ENCODE measurements at regions of chr16 and their contacts with region 1.

Region 1: DNA sequence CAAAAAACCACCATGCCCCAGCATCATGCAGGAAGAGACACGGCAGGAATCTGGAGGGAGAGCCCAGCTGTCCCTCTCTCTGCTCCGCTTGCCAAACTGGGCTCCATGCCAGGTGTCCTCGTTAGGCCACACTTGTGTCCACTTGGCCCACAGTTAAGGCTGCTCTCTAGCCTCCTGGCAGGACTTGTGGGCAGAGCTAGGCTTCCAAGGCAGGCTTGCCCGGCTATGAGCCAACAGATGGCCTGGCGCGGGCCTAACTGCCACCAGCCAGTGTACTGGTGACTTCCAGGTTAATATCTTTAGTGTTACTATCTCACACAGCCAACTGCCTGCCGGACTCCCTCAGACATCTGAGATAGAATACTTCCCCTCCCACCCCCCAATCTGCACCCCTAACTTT is 10.6 kb downstream of the ATP6V0D1 start:
- DNase-seq: no peak
- H3K4me3 ChIP-seq: no peak overlapping the region
- CTCF ChIP-seq: no peak

Region 2: DNA sequence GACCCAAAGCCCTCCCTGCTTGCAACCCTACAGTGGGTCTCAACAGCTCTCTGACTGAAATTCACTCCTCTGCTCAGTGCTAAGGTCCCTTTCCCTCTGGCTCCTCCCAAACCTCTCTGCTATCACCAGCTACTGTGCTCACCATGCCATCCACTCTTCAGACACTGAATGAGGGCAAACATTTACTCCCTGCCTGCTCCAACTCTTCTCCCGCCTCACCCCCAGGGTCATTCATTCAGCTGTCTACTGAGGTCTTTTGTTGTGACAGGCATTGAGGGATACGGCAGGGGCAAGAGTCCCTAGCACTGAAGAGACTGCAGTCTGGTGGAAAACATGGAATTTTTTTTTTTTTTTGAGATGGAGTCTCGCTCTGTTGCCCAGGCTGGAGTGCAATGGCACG is 68.1 kb before region 1 on chr16:
- CTCF ChIA-PET with region 1: no interaction called
- POLR2A ChIA-PET with region 1: no interaction called
- DNase-seq: no peak
- H3K4me3 ChIP-seq: no peak overlapping the region
- CTCF ChIP-seq: no peak

Region 3: DNA sequence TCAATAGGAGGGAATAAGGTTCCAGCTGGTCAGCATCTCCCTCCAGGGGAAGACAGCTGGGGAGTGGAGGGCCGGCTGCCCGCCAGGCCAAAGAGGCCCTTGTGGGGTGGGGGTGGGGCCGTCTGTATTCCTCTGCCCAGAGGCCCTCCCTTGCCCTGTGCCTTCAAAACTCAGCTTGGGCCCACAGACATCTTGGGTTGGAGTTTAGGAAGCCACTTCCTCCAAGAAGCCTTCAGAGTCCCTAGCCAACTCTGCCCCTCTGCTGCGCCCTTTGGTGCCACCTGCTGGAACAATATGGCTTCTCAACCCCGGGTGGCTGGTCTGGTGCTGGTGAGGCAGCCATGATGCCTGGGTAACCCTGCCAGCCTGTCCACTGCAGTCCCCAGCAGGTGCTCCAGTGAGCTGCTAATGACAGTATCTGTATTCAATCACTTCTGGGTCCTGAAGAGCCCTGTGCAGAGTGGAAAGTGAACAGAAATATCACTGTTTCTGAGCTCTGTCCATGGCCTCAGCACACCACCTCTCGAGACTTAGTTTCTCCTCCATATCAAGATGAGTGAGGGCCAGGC is 22.8 kb before region 1 on chr16:
- CTCF ChIA-PET with region 1: interaction called, 53 read pairs
- POLR2A ChIA-PET with region 1: no interaction called
- DNase-seq: no peak
- H3K4me3 ChIP-seq: no peak overlapping the region
- CTCF ChIP-seq: peak; percentile 34

Region 4: DNA sequence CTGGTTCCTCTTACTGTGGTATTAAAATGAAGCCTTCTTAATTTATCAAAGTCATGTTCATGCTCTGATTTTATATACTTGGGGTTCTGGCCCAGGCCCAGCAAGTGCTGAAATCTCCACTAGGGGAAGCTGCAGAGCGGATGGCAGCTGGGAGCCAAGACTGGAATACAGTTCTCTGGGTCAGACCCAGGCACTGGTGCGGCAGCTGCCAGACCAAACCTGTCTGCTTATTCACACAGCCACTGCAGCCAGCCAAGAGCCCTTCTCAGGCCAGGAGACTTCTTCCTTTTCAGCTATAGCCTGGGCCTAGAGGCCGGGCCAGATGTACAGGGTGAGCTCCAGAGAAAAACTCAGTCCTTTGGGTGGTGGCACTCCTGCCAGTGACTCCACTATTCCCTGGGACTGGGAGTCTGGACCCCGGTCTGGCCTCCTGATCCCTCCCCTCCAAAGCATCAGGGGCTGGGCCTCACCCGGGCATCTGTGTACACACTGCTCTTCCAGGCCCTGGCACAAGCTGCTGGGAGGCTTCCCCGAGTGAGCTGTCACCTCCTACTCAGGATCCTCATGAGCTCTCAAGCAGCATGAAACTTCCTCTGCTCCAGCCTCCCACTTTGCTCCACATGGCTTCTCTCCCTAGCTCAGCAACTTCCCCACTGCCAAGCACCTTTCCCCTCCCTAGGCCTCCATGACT is 13.8 kb before region 1 on chr16:
- CTCF ChIA-PET with region 1: interaction called, 36 read pairs
- POLR2A ChIA-PET with region 1: no interaction called
- DNase-seq: no peak
- H3K4me3 ChIP-seq: no peak overlapping the region
- CTCF ChIP-seq: peak; percentile 21

Region 5: DNA sequence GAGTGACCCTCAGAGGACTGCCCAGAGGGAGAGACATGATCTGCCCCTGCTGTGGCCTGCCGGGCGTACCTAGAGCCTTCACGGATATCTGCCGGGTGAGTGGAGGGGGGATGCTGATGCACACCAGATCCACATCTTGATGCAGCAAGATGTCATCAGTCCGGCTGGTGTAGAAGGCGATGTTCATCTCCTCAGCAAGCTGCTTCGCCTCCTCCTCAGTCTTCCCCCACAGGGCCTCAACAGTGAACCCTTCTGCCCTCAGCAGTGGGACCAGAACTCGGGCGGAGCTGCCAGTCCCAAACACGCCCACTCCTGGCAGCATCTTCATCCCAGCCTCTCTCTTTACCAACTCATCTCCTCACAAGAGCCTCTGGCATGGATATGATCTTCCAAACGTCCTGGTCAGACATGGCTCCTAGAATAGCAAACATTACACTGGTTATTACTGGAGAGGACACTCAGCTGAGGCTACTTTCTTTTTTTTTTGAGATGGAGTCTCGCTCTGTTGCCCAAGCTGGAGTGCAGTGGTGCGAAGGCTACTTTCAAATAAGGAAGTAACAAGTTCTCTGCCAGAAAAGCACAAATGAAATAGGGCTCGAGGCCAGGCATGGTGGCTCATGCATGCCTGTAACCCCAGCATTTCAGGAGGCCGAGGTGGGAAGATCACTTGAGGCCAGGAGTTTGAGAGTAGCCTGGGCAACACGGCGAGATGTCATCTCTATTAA is 215.2 kb after region 1 on chr16:
- CTCF ChIA-PET with region 1: no interaction called
- POLR2A ChIA-PET with region 1: no interaction called
- DNase-seq: no peak
- H3K4me3 ChIP-seq: no peak overlapping the region
- CTCF ChIP-seq: no peak

Region 6: DNA sequence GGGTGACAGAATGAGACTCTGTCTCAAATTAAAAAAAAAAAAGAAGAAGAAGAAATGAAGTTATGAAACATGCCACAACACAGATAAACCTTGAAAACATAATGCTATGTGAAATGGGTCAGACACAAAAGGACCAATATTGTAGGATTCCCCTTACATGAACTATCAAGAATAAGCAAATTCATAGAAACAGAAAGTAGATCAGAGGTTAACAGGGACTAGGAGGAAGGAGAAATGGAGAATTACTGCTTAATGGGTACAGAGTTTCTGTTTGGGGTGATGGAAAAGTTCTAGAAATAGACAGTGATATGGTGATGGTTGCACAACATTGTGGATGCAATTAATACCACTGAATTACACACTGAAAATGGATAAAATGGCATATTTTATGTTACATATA is 319.7 kb after region 1 on chr16:
- CTCF ChIA-PET with region 1: no interaction called
- POLR2A ChIA-PET with region 1: no interaction called
- DNase-seq: no peak
- H3K4me3 ChIP-seq: no peak overlapping the region
- CTCF ChIP-seq: no peak